ENCODE measurements at regions of chr4 and their contacts with region 1.

Region 1: GRCh38 chr4:40056716-40057585 is at the start of gene N4BP2:
- DNase-seq: peak; percentile 86
- H3K4me3 ChIP-seq: peak within 1 kb of the TSS; percentile 96
- H3K27ac ChIP-seq: peak within 1 kb of the TSS; percentile 100
- H3K4me1 ChIP-seq: peaks cover 37% of the 10 kb centered on the region
- H3K27me3 ChIP-seq: no peaks in the 10 kb centered on the region
- CTCF ChIP-seq: peak; percentile 86
- total RNA-seq, gene N4BP2: 5.0 TPM

Region 2: DNA sequence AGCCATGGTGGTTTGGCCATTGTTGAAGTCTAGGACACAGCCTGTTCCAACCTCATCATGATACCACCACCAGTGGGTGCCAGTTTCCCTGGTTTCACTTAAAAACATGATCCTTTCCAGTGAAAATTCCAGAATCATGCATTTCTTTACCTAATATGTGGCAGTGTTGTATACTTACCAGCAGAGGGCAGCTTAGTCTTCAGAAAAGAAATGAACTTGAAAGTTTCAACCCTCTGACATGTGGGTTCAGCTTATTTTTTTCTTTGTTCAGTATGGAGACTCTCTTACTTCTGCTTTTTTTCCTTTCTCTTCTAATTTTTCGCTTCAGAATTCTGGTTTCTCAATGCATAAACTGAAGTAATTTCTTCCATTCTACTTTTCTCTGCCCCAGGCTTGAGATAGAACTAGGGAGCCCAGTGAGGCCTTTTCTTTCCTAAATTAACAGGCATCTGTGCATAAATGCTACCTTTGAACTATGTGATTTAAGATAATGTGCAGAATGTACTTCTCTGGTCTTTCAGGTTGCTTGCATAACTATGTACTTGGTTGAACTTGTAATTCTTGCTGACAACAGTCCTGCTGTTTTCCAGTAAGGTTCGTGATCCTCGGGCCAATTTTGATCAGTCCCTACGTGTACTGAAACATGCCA is 587.4 kb before region 1 on chr4:
- intact Hi-C with region 1: loop called (anchors 10 kb)
- DNase-seq: no peak
- H3K4me3 ChIP-seq: no peak overlapping the region
- H3K27ac ChIP-seq: peak overlapping the region; percentile 39
- H3K4me1 ChIP-seq: no peaks in the 10 kb centered on the region
- H3K27me3 ChIP-seq: no peaks in the 10 kb centered on the region
- CTCF ChIP-seq: peak; percentile 88

Region 3: GRCh38 chr4:40309250-40309774 is 252.4 kb after region 1 on chr4:
- intact Hi-C with region 1: loop called (anchors 5 kb)
- DNase-seq: peak; percentile 84
- H3K4me3 ChIP-seq: no peak overlapping the region
- H3K27ac ChIP-seq: no peak overlapping the region
- H3K4me1 ChIP-seq: peaks cover 4% of the 10 kb centered on the region
- H3K27me3 ChIP-seq: peaks cover 18% of the 10 kb centered on the region
- CTCF ChIP-seq: peak; percentile 90

Measured in left ventricle myocardium inferior (tissue), 1 donor.